Panc1 (cell line): ENCODE measurements at regions of chr5 and their contacts with region 1.

Region 1: GRCh38 chr5:159915904-159916840 is at the start of gene ADRA1B:
- DNase-seq: no peak
- ATAC-seq: peak; percentile 87
- H3K4me3 ChIP-seq: peak within 1 kb of the TSS; percentile 36 to 66
- H3K27ac ChIP-seq: peak within 1 kb of the TSS; percentile 2
- H3K4me1 ChIP-seq: peaks cover 24% of the 10 kb centered on the region
- H3K27me3 ChIP-seq: no peaks in the 10 kb centered on the region
- CTCF ChIP-seq: peak; percentile 86
- total RNA-seq, gene ADRA1B: 8.3 TPM

Region 2: DNA sequence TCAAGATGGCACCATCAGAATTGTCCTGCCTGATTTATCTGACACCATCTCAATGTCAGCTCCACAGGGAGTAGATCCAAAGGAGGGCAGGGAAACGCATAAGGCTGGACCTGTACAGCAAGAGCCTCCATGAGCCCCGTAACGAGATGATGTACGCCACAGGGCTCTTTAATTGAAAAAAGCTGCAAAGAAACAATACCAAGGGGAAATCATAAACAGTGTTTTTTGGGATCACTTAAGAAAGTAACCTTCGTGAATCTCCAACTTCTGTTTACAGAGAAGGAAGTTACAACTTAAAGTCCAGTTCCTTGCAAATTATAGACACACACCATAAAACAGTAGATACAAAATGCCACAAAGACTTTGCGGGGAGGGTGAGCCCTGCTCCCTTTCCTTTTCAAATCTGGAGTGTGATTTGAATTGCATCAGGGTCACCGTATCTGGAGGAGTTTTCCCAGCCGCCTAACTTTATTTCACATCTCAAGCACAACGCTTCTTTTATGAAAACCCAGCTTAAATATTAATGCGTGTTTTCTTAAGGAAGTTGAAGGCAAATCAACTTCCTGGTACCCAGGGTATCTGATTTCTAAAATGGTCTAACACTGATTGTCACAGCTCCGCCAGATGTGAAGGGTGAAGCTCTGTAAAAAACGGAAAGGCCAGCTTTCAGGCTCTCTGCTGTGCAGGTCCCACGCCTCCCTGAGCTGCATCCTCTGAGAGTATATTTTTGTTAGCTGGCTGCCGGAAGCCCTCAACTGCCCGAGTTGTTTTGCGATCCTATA is 905.3 kb before region 1 on chr5:
- CTCF ChIA-PET with region 1: no interaction called
- POLR2A ChIA-PET with region 1: no interaction called
- in situ Hi-C with region 1: no loop called
- intact Hi-C with region 1: no loop called
- DNase-seq: no peak
- ATAC-seq: no peak
- H3K4me3 ChIP-seq: no peak overlapping the region
- H3K27ac ChIP-seq: no peak overlapping the region
- H3K4me1 ChIP-seq: no peaks in the 10 kb centered on the region
- H3K27me3 ChIP-seq: no peaks in the 10 kb centered on the region; the same call in 1 of the 2 replicates
- CTCF ChIP-seq: no peak

Region 3: GRCh38 chr5:159444441-159445082 is 471.6 kb before region 1 on chr5:
- CTCF ChIA-PET with region 1: interaction called, 3 read pairs
- POLR2A ChIA-PET with region 1: no interaction called
- in situ Hi-C with region 1: no loop called
- intact Hi-C with region 1: loop called (anchors 2 kb)
- DNase-seq: peak; percentile 76
- ATAC-seq: peak; percentile 86
- H3K4me3 ChIP-seq: no peak overlapping the region
- H3K27ac ChIP-seq: no peak overlapping the region
- H3K4me1 ChIP-seq: no peaks in the 10 kb centered on the region; the same call in 1 of the 2 replicates
- H3K27me3 ChIP-seq: no peaks in the 10 kb centered on the region
- CTCF ChIP-seq: peak; percentile 69

Region 4: DNA sequence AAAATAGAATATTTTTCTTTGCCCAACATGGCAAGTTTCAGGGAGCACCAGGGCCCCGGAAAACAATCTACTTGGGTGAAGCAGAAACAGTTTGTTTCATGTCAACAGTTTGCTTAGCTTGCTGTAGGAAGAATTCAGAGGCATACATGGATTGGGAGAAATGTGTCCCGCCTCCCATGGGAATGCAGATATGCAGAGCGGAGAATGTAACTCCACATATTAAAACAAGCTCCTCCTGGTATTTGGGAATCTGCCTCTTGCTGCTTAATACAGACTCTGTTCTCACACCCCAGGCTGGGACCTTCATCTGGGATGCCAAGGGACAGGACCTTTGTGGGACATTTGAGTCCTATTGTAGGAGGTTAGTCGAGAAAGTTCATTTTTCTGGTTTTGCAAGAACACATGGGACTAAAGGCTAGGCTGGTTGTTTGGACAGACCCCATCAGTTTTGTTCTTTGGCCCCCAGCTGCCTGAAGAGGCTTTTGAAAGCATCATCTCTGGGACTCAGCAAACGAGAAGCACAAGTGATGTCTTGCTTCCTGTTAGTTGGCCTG is 220.4 kb before region 1 on chr5:
- CTCF ChIA-PET with region 1: no interaction called
- POLR2A ChIA-PET with region 1: no interaction called
- in situ Hi-C with region 1: no loop called
- intact Hi-C with region 1: no loop called
- DNase-seq: no peak
- ATAC-seq: no peak
- H3K4me3 ChIP-seq: no peak overlapping the region
- H3K27ac ChIP-seq: no peak overlapping the region
- H3K4me1 ChIP-seq: no peaks in the 10 kb centered on the region
- H3K27me3 ChIP-seq: no peaks in the 10 kb centered on the region
- CTCF ChIP-seq: no peak

Region 5: DNA sequence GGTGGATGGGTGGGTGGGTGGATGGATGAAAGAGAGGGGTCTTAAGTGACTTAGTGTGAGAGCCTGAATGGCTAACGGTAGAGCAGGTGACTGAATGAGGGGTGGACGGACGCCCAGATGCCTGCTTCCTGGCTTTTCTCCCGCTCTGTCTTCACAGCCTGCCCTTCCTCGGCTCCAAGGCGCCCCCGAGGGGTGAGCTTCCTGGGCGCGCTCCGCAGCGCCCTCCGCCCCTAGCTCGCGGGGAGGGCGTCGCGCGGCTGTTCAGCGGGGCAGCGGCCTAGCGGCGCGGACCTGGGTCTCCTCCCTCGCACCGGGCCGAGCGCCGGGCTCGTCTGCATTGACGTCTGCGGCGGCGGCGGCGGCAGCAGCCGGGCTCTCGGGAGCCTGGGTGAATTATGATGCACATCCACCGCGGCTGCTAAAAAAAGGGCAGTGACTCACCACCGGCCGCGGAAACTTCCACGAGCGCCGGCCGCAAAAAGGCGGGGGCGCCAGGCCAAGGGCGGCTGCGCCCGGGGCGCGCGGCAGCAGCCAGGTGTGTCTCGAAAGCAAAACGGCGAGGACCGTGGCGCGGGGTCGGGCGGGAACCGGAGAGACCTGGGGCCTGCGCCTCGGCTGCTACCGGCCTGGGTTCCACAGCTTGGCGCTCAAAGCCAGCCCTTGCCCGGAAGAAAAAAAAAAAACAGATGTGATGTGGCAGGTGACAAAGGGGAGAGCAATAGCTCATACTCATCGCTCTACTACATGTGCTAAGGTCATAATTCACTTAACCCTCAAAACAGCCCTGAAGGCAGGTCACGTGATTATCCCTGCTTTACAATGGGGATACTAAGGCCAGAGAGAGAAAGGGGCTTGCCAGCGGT is 142.9 kb before region 1 on chr5:
- CTCF ChIA-PET with region 1: no interaction called
- POLR2A ChIA-PET with region 1: no interaction called
- in situ Hi-C with region 1: no loop called
- intact Hi-C with region 1: loop called (anchors 10 kb)
- DNase-seq: peak; percentile 15
- ATAC-seq: peak; percentile 92
- H3K4me3 ChIP-seq: peak overlapping the region; percentile 44 to 57
- H3K27ac ChIP-seq: no peak overlapping the region
- H3K4me1 ChIP-seq: no peaks in the 10 kb centered on the region; the same call in none of the 2 replicates
- H3K27me3 ChIP-seq: no peaks in the 10 kb centered on the region
- CTCF ChIP-seq: peak; percentile 73

Region 6: GRCh38 chr5:159987031-159987674 is 71.0 kb after region 1 on chr5:
- CTCF ChIA-PET with region 1: interaction called, 5 read pairs
- POLR2A ChIA-PET with region 1: no interaction called
- in situ Hi-C with region 1: no loop called
- intact Hi-C with region 1: loop called (anchors 5 kb)
- DNase-seq: no peak
- ATAC-seq: peak; percentile 97
- H3K4me3 ChIP-seq: peak overlapping the region; percentile 40 to 63
- H3K27ac ChIP-seq: no peak overlapping the region
- H3K4me1 ChIP-seq: no peaks in the 10 kb centered on the region
- H3K27me3 ChIP-seq: no peaks in the 10 kb centered on the region; the same call in 1 of the 2 replicates
- CTCF ChIP-seq: peak; percentile 94

Region 7: GRCh38 chr5:160036243-160036642 is 120.1 kb after region 1 on chr5:
- CTCF ChIA-PET with region 1: no interaction called
- POLR2A ChIA-PET with region 1: no interaction called
- in situ Hi-C with region 1: no loop called
- intact Hi-C with region 1: no loop called
- DNase-seq: no peak
- ATAC-seq: no peak
- H3K4me3 ChIP-seq: no peak overlapping the region
- H3K27ac ChIP-seq: no peak overlapping the region
- H3K4me1 ChIP-seq: no peaks in the 10 kb centered on the region
- H3K27me3 ChIP-seq: no peaks in the 10 kb centered on the region
- CTCF ChIP-seq: no peak

Region 8: GRCh38 chr5:160287378-160288051 is 371.3 kb after region 1 on chr5:
- CTCF ChIA-PET with region 1: no interaction called
- POLR2A ChIA-PET with region 1: no interaction called
- in situ Hi-C with region 1: no loop called
- intact Hi-C with region 1: no loop called
- DNase-seq: no peak
- ATAC-seq: peak; percentile 61
- H3K4me3 ChIP-seq: no peak overlapping the region
- H3K27ac ChIP-seq: no peak overlapping the region; the same call in 1 of the 2 replicates
- H3K4me1 ChIP-seq: peaks cover 31% of the 10 kb centered on the region
- H3K27me3 ChIP-seq: no peaks in the 10 kb centered on the region
- CTCF ChIP-seq: no peak